ENCODE measurements at regions of chr21 and their contacts with region 1.

Region 1: DNA sequence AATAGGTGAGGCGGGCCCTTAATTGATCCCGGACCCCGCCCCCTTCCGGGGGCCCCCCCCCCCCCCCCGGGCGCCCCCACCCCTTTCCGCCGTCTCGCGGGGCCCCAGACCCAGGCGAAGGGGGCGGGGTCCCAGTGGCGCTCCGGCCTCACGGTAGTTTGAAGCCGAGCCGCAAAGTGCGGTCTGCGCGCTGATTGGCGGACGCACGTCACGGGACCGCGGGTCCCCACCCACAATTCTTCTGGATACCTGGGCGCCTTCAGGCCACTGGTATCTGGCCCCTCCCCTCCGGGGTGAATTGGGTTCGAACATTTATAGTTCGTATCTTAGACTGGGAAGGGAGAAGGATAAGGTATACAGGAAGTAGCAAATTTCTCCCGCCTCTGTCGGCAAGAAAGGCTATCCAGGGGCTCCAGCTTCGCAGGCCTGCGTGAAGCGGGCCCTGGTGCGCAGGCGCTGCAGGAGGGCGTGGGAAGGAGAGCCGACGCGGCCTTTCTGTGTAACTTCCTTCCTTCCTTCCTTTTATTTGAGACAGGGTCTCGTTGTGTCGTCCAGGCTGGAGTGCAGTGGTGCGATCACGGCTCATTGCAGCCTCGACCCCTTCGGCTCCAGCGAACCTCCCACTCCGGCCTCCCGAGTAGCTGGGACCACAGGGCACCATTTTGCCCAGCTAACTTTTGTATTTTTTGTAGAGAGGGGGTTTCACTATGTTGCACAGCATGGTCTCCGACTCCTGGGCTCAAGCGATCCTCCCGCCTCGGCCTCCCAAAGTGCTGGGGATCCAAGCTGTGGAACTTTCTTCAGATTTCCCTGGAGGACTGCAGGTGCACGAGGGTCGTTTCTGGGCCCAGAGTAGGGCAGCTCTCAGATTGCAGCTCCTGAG is 564 bp upstream of the HMGN1 start:
- DNase-seq: peak; percentile 91 to 98 (median 97)
- ATAC-seq: peak; percentile 91
- H3K4me3 ChIP-seq: peak overlapping the region; percentile 79
- H3K4me3 Mint-ChIP-seq: peak overlapping the region; percentile 88 to 99 (median 96)
- H3K27ac ChIP-seq: peak overlapping the region; percentile 87
- H3K27ac Mint-ChIP-seq: peak overlapping the region; percentile 94 to 100 (median 99)
- H3K4me1 ChIP-seq: peaks cover 20 to 25% of the 10 kb centered on the region in 2 donors
- H3K4me1 Mint-ChIP-seq: peaks cover 30 to 49% (median 37%) of the 10 kb centered on the region in 7 donors
- H3K27me3 ChIP-seq: no peaks in the 10 kb centered on the region
- H3K27me3 Mint-ChIP-seq: peaks cover 0 to 16% (median 0%) of the 10 kb centered on the region in 5 donors

Region 2: DNA sequence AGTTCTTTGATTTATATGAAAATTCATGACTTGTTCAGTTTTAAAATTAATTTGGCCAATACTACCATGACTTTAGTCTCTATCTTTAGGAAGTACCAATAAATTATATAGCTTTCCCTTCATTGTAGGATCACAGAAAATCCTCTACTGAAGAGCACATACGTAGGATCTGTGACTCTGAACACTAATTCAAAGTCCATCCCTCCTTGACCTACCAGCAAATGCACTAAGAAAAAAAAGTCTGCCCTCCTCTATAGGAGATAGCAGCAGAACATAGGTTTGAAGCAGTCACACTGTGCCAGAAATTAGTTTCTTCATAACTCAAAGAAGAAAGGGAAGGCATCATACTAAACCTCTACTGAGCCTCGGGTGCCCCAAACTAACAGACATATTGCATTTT is 52.6 kb before region 1 on chr21:
- CTCF ChIA-PET with region 1: no interaction called
- POLR2A ChIA-PET with region 1: interaction called, 9 read pairs
- intact Hi-C with region 1: loop called in 1 of 2 experiments (anchors 5 kb)
- DNase-seq: no peak
- ATAC-seq: no peak
- H3K4me3 ChIP-seq: no peak overlapping the region
- H3K4me3 Mint-ChIP-seq: peak overlapping the region in 2 of 10 donors; percentile 36 to 54
- H3K27ac ChIP-seq: no peak overlapping the region
- H3K27ac Mint-ChIP-seq: peak overlapping the region in 2 of 9 donors; percentile 37 to 62
- H3K4me1 ChIP-seq: peaks cover 9 to 12% of the 10 kb centered on the region in 2 donors
- H3K4me1 Mint-ChIP-seq: peaks cover 19 to 51% (median 39%) of the 10 kb centered on the region in 7 donors
- H3K27me3 ChIP-seq: no peaks in the 10 kb centered on the region
- H3K27me3 Mint-ChIP-seq: no peaks in the 10 kb centered on the region

Region 3: GRCh38 chr21:39379986-39380891 is 30.8 kb after region 1 on chr21:
- CTCF ChIA-PET with region 1: no interaction called
- POLR2A ChIA-PET with region 1: interaction called, 19 read pairs
- intact Hi-C with region 1: loop called (anchors 1 kb)
- DNase-seq: peak; percentile 76 to 91 (median 83)
- ATAC-seq: peak; percentile 99
- H3K4me3 ChIP-seq: peak overlapping the region; percentile 95
- H3K4me3 Mint-ChIP-seq: peak overlapping the region; percentile 88 to 95 (median 92)
- H3K27ac ChIP-seq: peak overlapping the region; percentile 84
- H3K27ac Mint-ChIP-seq: peak overlapping the region; percentile 33 to 95 (median 93)
- H3K4me1 ChIP-seq: peaks cover 7 to 10% of the 10 kb centered on the region in 2 donors
- H3K4me1 Mint-ChIP-seq: peaks cover 8 to 31% (median 24%) of the 10 kb centered on the region in 7 donors
- H3K27me3 ChIP-seq: no peaks in the 10 kb centered on the region
- H3K27me3 Mint-ChIP-seq: peaks cover 0 to 5% (median 4%) of the 10 kb centered on the region in 5 donors

Region 4: DNA sequence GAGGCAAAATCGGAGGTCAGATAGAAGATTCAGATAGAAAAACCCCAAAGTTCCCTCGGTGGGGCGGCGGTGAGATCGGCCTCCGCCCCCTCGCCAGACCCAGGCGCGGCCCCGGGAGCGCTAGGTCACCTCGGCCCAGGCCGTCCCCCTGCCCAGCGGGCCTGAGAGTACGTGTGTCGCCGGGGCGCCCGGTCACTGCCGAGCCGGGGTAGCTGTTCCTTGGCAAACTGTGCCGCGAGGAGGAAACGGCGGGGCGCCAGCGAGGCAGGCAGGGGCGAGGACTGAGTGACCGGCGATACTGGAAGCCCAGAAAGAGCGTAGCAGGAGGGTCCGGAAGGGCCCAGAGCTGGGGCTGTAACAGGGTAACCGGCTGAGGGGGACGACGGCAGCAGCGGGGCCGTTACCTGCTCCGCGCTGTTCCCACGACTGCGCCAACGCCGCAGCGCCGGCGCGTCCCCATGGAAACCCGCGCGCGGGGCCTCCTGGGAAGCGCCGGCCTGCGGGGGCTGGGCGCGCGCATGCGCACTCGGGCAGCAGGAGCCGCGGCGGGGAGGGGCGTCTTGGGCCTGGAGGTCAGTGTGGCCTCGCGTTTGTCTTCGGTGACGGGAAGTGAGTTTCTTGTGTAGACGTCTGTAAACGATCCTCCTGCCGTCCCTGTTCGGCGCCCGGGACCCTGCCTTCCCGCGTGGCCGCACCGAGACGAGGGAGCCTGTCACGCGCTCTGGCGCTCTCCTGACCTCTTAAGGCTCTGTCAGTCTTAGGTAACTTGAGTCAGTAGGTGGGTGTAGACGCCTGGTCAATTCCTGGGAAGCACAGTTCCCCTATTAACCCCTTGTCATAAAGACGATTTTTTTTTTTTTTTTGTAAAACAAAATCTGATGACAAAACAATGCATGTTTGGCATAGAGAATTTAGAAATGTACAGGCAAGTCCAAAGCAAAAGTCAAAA is 96.1 kb after region 1 on chr21 and contains the start of gene LCA5L:
- CTCF ChIA-PET with region 1: interaction called, 3 read pairs
- POLR2A ChIA-PET with region 1: no interaction called
- intact Hi-C with region 1: loop called in 1 of 2 experiments (anchors 1 kb)
- DNase-seq: peak; percentile 80 to 96 (median 90)
- ATAC-seq: peak; percentile 93
- H3K4me3 ChIP-seq: peak within 1 kb of the TSS; percentile 83
- H3K4me3 Mint-ChIP-seq: peak within 1 kb of the TSS; percentile 91 to 99 (median 94)
- H3K27ac ChIP-seq: peak within 1 kb of the TSS; percentile 76
- H3K27ac Mint-ChIP-seq: peak within 1 kb of the TSS; percentile 86 to 98 (median 94)
- H3K4me1 ChIP-seq: peaks cover 11 to 13% of the 10 kb centered on the region in 2 donors
- H3K4me1 Mint-ChIP-seq: peaks cover 8 to 26% (median 14%) of the 10 kb centered on the region in 7 donors
- H3K27me3 ChIP-seq: peaks cover 0 to 2% of the 10 kb centered on the region in 2 donors
- H3K27me3 Mint-ChIP-seq: peaks cover 0 to 44% (median 14%) of the 10 kb centered on the region in 5 donors
- total RNA-seq, gene LCA5L: not detected